ENCODE measurements at regions of chr5 and their contacts with region 1.

Region 1: GRCh38 chr5:150700594-150701293 is at the start of gene RBM22:
- DNase-seq: peak; percentile 57
- ATAC-seq: peak; percentile 98
- H3K4me3 ChIP-seq: peak within 1 kb of the TSS; percentile 91
- H3K27ac ChIP-seq: peak within 1 kb of the TSS; percentile 87
- H3K4me1 ChIP-seq: no peaks in the 10 kb centered on the region
- H3K27me3 ChIP-seq: no peaks in the 10 kb centered on the region
- CTCF ChIP-seq: peak; percentile 57 to 70 (median 60)
- EP300 ChIP-seq: peak in 1 of 2 experiments; percentile 22; a peak in 1 of 4 replicates
- POLR2A ChIP-seq: peak; percentile 93
- RAD21 ChIP-seq: peak; percentile 29; the same call in 1 of the 2 replicates
- polyA plus RNA-seq, gene RBM22: 26.3 to 40.3 TPM

Region 2: GRCh38 chr5:150523472-150524350 is 177.0 kb before region 1 on chr5:
- CTCF ChIA-PET with region 1: no interaction called
- POLR2A ChIA-PET with region 1: no interaction called
- RAD21 ChIA-PET with region 1: no interaction called
- SMC1A ChIA-PET with region 1: no interaction called
- in situ Hi-C with region 1: no loop called
- intact Hi-C with region 1: no loop called
- DNase-seq: no peak
- ATAC-seq: peak; percentile 88
- H3K4me3 ChIP-seq: no peak overlapping the region
- H3K27ac ChIP-seq: no peak overlapping the region
- H3K4me1 ChIP-seq: no peaks in the 10 kb centered on the region
- H3K27me3 ChIP-seq: no peaks in the 10 kb centered on the region
- CTCF ChIP-seq: peak; percentile 56 to 62 (median 60)
- EP300 ChIP-seq: no peak
- POLR2A ChIP-seq: no peak
- RAD21 ChIP-seq: peak; percentile 61

Region 3: GRCh38 chr5:150640311-150641005 is 60.3 kb before region 1 on chr5 and contains the start of gene SYNPO:
- CTCF ChIA-PET with region 1: no interaction called
- POLR2A ChIA-PET with region 1: no interaction called
- RAD21 ChIA-PET with region 1: no interaction called
- SMC1A ChIA-PET with region 1: no interaction called
- in situ Hi-C with region 1: no loop called
- intact Hi-C with region 1: no loop called
- DNase-seq: no peak
- ATAC-seq: no peak
- H3K4me3 ChIP-seq: no peak within 1 kb of the TSS
- H3K27ac ChIP-seq: no peak within 1 kb of the TSS
- H3K4me1 ChIP-seq: no peaks in the 10 kb centered on the region
- H3K27me3 ChIP-seq: no peaks in the 10 kb centered on the region
- CTCF ChIP-seq: no peak
- EP300 ChIP-seq: no peak
- POLR2A ChIP-seq: no peak
- RAD21 ChIP-seq: no peak
- polyA plus RNA-seq, gene SYNPO: 1.9 to 2.3 TPM

Region 4: DNA sequence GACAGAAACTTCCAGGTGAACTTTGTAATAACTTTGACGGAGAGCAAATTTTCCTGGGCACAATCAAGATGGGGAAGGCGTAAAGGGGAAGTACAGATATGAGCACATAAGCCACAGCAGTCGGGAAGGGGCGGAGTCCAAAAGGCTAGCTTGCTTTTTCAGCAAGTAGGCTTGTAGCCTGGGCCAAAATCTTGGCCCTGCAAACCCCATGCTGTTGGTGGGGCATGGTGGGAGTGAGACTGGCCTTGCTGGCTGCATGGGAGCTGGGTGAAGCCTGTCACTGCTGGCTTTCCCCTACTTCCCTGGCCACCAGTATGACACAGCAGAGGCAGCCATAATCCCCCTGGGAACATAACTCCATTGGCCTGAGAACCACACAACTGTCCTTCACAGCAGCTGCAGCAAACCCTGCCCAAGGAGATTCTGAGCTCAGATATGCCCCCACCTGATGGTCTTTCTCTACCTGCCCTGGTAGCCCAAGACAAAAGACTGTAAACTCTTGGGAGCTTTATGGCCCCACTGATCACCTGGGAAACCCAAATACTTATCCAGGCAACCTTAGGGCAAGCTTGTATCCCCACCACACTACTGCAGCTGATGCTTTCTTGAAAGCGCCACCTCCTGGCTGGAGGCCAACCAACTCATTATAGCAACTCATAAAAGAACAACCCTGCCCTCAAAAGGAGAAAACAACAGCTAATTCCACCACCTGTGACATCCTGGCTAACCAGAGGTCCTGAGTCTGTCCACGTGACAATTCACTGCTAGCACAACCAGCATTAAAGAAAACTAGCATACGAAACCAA is 34.0 kb after region 1 on chr5:
- CTCF ChIA-PET with region 1: interaction called, 27 read pairs
- POLR2A ChIA-PET with region 1: interaction called, 3 read pairs
- RAD21 ChIA-PET with region 1: no interaction called
- SMC1A ChIA-PET with region 1: interaction called, 3 read pairs
- in situ Hi-C with region 1: no loop called
- intact Hi-C with region 1: no loop called
- DNase-seq: peak; percentile 53
- ATAC-seq: peak; percentile 96
- H3K4me3 ChIP-seq: no peak overlapping the region
- H3K27ac ChIP-seq: peak overlapping the region; percentile 67
- H3K4me1 ChIP-seq: peaks cover 14% of the 10 kb centered on the region
- H3K27me3 ChIP-seq: no peaks in the 10 kb centered on the region
- CTCF ChIP-seq: peak; percentile 10 to 21 (median 19); a peak in 3 of 6 replicates
- EP300 ChIP-seq: no peak
- POLR2A ChIP-seq: no peak
- RAD21 ChIP-seq: no peak